Activated B cell treated with CpG ODN at 0.5 μM for 24 hours (primary cell): ENCODE measurements at regions of chr15 and their contacts with region 1.

Region 1: GRCh38 chr15:64905119-64905831 is 6.4 kb upstream of the ANKDD1A start:
- DNase-seq: peak; percentile 78
- ATAC-seq: peak; percentile 98
- H3K4me3 Mint-ChIP-seq: peak overlapping the region; percentile 82
- H3K27ac Mint-ChIP-seq: peak overlapping the region; percentile 66
- H3K4me1 Mint-ChIP-seq: peaks cover 41% of the 10 kb centered on the region
- H3K27me3 Mint-ChIP-seq: peaks cover 2% of the 10 kb centered on the region
- CTCF ChIP-seq: peak; percentile 59

Region 2: GRCh38 chr15:64681424-64682024 is 223.8 kb before region 1 on chr15:
- CTCF ChIA-PET with region 1: interaction called, 4 read pairs
- POLR2A ChIA-PET with region 1: no interaction called
- intact Hi-C with region 1: loop called (anchors 2 kb)
- DNase-seq: no peak
- ATAC-seq: peak; percentile 28
- H3K4me3 Mint-ChIP-seq: no peak overlapping the region
- H3K27ac Mint-ChIP-seq: no peak overlapping the region
- H3K4me1 Mint-ChIP-seq: no peaks in the 10 kb centered on the region
- H3K27me3 Mint-ChIP-seq: no peaks in the 10 kb centered on the region
- CTCF ChIP-seq: no peak

Region 3: DNA sequence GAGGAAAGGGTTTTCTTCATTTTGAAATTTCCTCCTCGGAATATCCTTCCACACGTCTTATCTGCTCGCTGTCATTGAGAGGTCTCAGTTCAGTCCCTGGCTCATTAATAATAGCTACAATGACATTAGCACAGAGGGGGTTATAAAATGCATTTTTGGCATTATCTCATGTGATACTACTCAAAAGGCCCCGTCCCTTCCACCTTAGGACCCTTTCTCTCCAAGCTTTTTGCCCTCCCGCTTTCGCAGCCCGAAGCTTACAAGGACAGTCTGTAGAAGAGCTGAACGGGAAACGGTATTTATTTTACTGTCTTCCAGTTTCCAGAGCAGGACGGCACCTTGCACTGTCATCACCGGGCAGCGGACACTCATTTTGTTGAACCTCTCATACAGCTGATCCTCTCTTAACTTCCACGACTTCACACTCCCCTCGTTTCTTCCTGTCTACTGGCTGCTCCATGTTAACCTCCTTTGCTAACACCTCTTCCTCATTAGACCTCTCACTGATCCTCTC is 69.2 kb before region 1 on chr15:
- CTCF ChIA-PET with region 1: interaction called, 8 read pairs
- POLR2A ChIA-PET with region 1: interaction called, 8 read pairs
- intact Hi-C with region 1: loop called (anchors 1 kb)
- DNase-seq: no peak
- ATAC-seq: no peak
- H3K4me3 Mint-ChIP-seq: peak overlapping the region; percentile 60
- H3K27ac Mint-ChIP-seq: peak overlapping the region; percentile 50
- H3K4me1 Mint-ChIP-seq: peaks cover 23% of the 10 kb centered on the region
- H3K27me3 Mint-ChIP-seq: no peaks in the 10 kb centered on the region
- CTCF ChIP-seq: no peak

Region 4: GRCh38 chr15:64841258-64842095 is 63.8 kb before region 1 on chr15 and contains the start of gene PLEKHO2:
- CTCF ChIA-PET with region 1: interaction called, 8 read pairs
- POLR2A ChIA-PET with region 1: interaction called, 8 read pairs
- intact Hi-C with region 1: loop called (anchors 1 kb)
- DNase-seq: peak; percentile 78
- ATAC-seq: peak; percentile 75
- H3K4me3 Mint-ChIP-seq: peak within 1 kb of the TSS; percentile 95
- H3K27ac Mint-ChIP-seq: peak within 1 kb of the TSS; percentile 75
- H3K4me1 Mint-ChIP-seq: peaks cover 53% of the 10 kb centered on the region
- H3K27me3 Mint-ChIP-seq: no peaks in the 10 kb centered on the region
- CTCF ChIP-seq: no peak
- total RNA-seq, gene PLEKHO2: 36.5 and 38.1 TPM in 2 replicates

Region 5: GRCh38 chr15:64865998-64866520 is 39.2 kb before region 1 on chr15:
- CTCF ChIA-PET with region 1: interaction called, 3 read pairs
- POLR2A ChIA-PET with region 1: no interaction called
- intact Hi-C with region 1: loop called (anchors 2 kb)
- DNase-seq: no peak
- ATAC-seq: no peak
- H3K4me3 Mint-ChIP-seq: no peak overlapping the region
- H3K27ac Mint-ChIP-seq: no peak overlapping the region
- H3K4me1 Mint-ChIP-seq: peaks cover 44% of the 10 kb centered on the region
- H3K27me3 Mint-ChIP-seq: no peaks in the 10 kb centered on the region
- CTCF ChIP-seq: no peak

Region 6: GRCh38 chr15:64921711-64922110 is 16.4 kb after region 1 on chr15:
- CTCF ChIA-PET with region 1: interaction called, 3 read pairs
- POLR2A ChIA-PET with region 1: interaction called, 10 read pairs
- intact Hi-C with region 1: no loop called
- DNase-seq: no peak
- ATAC-seq: no peak
- H3K4me3 Mint-ChIP-seq: no peak overlapping the region
- H3K27ac Mint-ChIP-seq: no peak overlapping the region
- H3K4me1 Mint-ChIP-seq: no peaks in the 10 kb centered on the region
- H3K27me3 Mint-ChIP-seq: no peaks in the 10 kb centered on the region
- CTCF ChIP-seq: no peak